SK-N-SH (cell line): ENCODE measurements at regions of chr7 and their contacts with region 1.

Region 1: DNA sequence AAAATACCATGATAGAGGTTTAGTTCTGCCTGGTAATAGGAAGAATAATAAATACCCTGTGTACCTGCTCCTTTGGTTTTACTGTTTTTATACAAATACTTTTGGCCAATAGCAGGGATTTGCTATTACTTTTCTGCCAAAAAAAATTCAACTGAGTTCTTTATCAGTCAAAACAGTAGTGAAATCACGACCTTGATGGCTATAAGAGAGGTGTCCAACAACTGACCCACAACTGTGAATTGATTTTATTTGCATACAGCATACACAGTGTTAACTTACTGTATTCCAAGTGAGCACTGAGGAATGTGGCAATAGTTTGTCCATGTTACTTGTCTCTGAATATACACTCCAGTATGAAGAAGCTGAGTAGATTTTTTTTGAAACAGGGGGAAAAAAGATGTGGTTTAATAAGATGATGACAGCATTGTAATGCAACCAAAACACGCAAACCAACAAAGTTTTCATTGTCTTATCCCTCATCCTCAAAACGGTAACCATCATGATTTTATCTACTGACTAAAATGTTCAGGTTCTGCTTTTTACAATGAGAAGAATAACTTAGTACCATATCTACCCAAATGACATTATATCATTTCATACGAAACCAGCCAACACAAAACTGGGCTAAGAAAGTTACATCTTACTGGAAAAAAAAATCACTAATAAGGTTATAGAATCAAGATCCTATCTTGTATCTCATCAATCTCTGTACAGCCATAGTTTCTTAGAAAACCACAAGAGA is 63.3 kb downstream of the GSAP start:
- DNase-seq: no peak
- H3K4me3 ChIP-seq: no peak overlapping the region
- H3K27ac ChIP-seq: no peak overlapping the region
- H3K4me1 ChIP-seq: peaks cover 15 to 22% of the 10 kb centered on the region in 2 experiments
- H3K27me3 ChIP-seq: no peaks in the 10 kb centered on the region
- CTCF ChIP-seq: no peak
- EP300 ChIP-seq: no peak
- RAD21 ChIP-seq: no peak

Region 2: DNA sequence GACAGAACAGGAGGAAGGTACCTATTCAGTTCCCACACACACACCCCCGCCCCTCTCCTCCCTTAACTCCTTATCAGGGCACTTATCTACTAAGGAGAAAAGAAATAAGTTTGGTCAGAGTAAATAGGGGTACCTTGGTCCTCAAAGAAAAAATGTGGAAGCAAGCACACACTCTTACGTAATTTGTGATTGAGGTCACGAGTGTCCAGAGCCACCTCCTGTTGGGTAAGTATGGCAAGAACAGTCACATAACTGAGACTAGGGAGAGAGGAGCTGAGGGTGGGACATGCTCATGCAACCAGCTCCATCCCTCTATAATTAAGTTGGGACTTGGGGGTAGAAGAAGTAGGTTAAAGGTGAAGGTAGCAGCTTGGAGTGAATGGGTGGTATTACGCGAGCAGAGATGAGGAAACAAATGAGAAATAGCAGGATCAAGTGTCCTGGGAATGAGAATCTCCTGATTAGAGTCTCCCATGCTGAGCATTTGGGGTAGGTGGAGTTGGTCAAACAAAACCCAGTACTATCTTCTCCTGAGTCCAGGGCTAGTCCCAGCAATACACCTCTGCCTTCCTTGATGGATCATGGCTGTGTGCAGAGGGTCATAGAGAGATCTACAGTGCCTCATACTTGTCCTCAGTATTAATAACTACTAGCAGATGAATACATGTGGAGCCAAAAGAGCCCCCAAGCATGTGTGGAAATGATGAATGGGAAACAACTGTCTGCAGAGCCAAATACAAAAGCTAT is 13.8 kb before region 1 on chr7:
- CTCF ChIA-PET with region 1: no interaction called
- POLR2A ChIA-PET with region 1: no interaction called
- DNase-seq: no peak
- H3K4me3 ChIP-seq: no peak overlapping the region
- H3K27ac ChIP-seq: no peak overlapping the region
- H3K4me1 ChIP-seq: no peaks in the 10 kb centered on the region
- H3K27me3 ChIP-seq: no peaks in the 10 kb centered on the region
- CTCF ChIP-seq: no peak
- EP300 ChIP-seq: no peak
- RAD21 ChIP-seq: no peak

Region 3: GRCh38 chr7:77368974-77369373 is 16.1 kb after region 1 on chr7:
- CTCF ChIA-PET with region 1: interaction called, 11 read pairs
- POLR2A ChIA-PET with region 1: no interaction called
- DNase-seq: no peak
- H3K4me3 ChIP-seq: no peak overlapping the region
- H3K27ac ChIP-seq: no peak overlapping the region
- H3K4me1 ChIP-seq: no peaks in the 10 kb centered on the region; a peak in 1 of 4 replicates
- H3K27me3 ChIP-seq: no peaks in the 10 kb centered on the region
- CTCF ChIP-seq: 0 out of 2 replicates have a peak, but pooled peaks have one; percentile 12
- EP300 ChIP-seq: no peak
- RAD21 ChIP-seq: no peak